ENCODE measurements at regions of chr2 and their contacts with region 1.

Region 1: DNA sequence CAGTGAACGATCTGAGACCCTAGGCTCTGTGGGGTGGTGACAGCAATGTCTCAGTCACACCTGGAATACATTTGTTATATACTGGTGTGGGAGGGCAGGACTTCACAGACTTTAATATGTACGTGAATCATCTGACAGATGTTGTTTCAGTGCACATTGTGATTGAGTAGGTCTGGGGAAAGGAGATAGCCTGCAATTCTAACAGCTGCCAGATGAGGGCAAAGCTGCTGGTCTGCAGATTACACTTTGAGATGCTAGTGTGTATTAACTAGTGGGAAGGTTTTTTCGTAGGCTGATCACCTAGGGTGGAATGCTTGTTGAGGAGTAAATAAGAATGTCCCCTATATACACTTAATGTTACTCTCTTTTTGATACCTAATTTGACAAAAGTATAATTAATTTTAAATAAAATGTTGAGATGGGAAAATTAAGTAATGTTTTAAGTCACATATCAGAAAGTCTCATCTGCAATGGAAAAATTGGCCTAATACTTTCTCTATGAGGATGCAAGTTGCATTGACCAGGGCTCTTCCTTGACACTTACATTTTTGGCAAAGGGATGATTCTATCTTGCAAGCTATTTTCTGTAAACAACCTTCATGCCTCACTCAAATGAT is 496.9 kb upstream of the HNMT start:
- DNase-seq: peak in 1 of 3 donors; percentile 53
- ATAC-seq: peak; percentile 78 to 85 (median 80)
- H3K4me3 ChIP-seq: no peak overlapping the region
- H3K27ac ChIP-seq: no peak overlapping the region
- H3K4me1 ChIP-seq: no peaks in the 10 kb centered on the region
- H3K27me3 ChIP-seq: no peaks in the 10 kb centered on the region
- CTCF ChIP-seq: peak; percentile 46 to 68 (median 57)
- POLR2A ChIP-seq: no peak

Region 2: GRCh38 chr2:137838255-137839092 is 371.1 kb after region 1 on chr2:
- intact Hi-C with region 1: loop called (anchors 10 kb)
- DNase-seq: no peak
- ATAC-seq: peak; percentile 79 to 90 (median 83)
- H3K4me3 ChIP-seq: no peak overlapping the region
- H3K27ac ChIP-seq: no peak overlapping the region
- H3K4me1 ChIP-seq: no peaks in the 10 kb centered on the region
- H3K27me3 ChIP-seq: no peaks in the 10 kb centered on the region
- CTCF ChIP-seq: peak; percentile 66 to 75 (median 72)
- POLR2A ChIP-seq: no peak

Measured in right lobe of liver (tissue), 6 donors.